GM12878 (cell line): ENCODE measurements at regions of chr2 and their contacts with region 1.

Region 1: DNA sequence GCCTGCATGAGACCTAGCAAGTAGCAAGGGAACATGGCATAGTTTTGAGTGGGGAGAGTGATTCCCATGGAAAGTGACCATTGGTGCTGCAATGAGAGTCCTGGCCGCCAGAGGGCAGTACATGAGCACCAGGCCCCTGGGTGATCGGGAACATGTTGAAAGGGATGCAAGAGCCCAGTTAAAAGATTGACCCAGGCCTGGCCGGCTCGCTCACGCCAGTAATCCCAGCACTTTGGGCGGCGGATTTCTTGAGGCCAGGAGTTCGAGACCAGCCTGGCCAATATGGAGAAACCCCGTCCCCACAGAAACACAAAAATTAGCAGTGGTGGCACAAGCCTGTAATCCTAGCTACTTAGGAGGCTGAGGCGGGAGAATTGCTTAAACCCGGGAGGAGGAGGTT is 22.2 kb downstream of the FAP start:
- DNase-seq: no peak
- ATAC-seq: peak; percentile 98
- H3K4me3 ChIP-seq: no peak overlapping the region
- H3K27ac ChIP-seq: no peak overlapping the region
- H3K4me1 ChIP-seq: no peaks in the 10 kb centered on the region
- H3K27me3 ChIP-seq: no peaks in the 10 kb centered on the region
- CTCF ChIP-seq: peak; percentile 92 to 97 (median 95)
- EP300 ChIP-seq: no peak
- POLR2A ChIP-seq: no peak
- RAD21 ChIP-seq: peak; percentile 78

Region 2: DNA sequence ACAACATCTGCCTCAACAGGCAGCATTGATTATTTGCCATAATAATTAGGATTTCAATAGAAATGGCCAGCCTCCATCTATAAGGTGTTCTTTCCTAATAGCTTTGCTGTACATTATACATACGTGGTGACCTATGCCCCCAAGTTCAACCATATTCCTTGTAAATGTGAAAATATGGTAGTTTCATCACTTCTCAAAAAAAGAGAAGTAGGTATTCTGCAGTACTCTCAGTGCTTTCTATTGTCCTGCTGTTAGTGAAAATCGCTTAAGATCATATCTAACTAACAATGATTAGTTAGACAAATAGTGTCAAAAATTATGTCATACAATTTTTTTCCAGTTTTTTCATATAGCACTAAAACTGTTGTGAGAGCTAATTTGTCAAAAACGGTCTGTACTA is 517.2 kb before region 1 on chr2:
- CTCF ChIA-PET with region 1: no interaction called
- POLR2A ChIA-PET with region 1: no interaction called
- RAD21 ChIA-PET with region 1: no interaction called
- SMC1A ChIA-PET with region 1: no interaction called
- in situ Hi-C with region 1: no loop called
- intact Hi-C with region 1: no loop called
- DNase-seq: no peak
- ATAC-seq: peak; percentile 63
- H3K4me3 ChIP-seq: no peak overlapping the region
- H3K27ac ChIP-seq: no peak overlapping the region
- H3K4me1 ChIP-seq: no peaks in the 10 kb centered on the region
- H3K27me3 ChIP-seq: no peaks in the 10 kb centered on the region
- CTCF ChIP-seq: no peak
- EP300 ChIP-seq: no peak
- POLR2A ChIP-seq: no peak
- RAD21 ChIP-seq: no peak

Region 3: GRCh38 chr2:161844834-161845233 is 376.2 kb before region 1 on chr2:
- CTCF ChIA-PET with region 1: no interaction called
- POLR2A ChIA-PET with region 1: no interaction called
- RAD21 ChIA-PET with region 1: no interaction called
- SMC1A ChIA-PET with region 1: no interaction called
- in situ Hi-C with region 1: no loop called
- intact Hi-C with region 1: no loop called
- DNase-seq: no peak
- ATAC-seq: no peak
- H3K4me3 ChIP-seq: no peak overlapping the region
- H3K27ac ChIP-seq: no peak overlapping the region
- H3K4me1 ChIP-seq: no peaks in the 10 kb centered on the region
- H3K27me3 ChIP-seq: no peaks in the 10 kb centered on the region
- CTCF ChIP-seq: no peak
- EP300 ChIP-seq: no peak
- POLR2A ChIP-seq: no peak
- RAD21 ChIP-seq: no peak

Region 4: GRCh38 chr2:162153608-162154224 is 67.3 kb before region 1 on chr2:
- CTCF ChIA-PET with region 1: interaction called, 12 read pairs
- POLR2A ChIA-PET with region 1: no interaction called
- RAD21 ChIA-PET with region 1: no interaction called
- SMC1A ChIA-PET with region 1: interaction called, 8 read pairs
- in situ Hi-C with region 1: no loop called
- intact Hi-C with region 1: no loop called
- DNase-seq: no peak
- ATAC-seq: peak; percentile 99
- H3K4me3 ChIP-seq: no peak overlapping the region
- H3K27ac ChIP-seq: no peak overlapping the region
- H3K4me1 ChIP-seq: no peaks in the 10 kb centered on the region
- H3K27me3 ChIP-seq: no peaks in the 10 kb centered on the region
- CTCF ChIP-seq: peak; percentile 80 to 90 (median 86)
- EP300 ChIP-seq: no peak
- POLR2A ChIP-seq: no peak
- RAD21 ChIP-seq: peak; percentile 70

Region 5: GRCh38 chr2:162196638-162197037 is 24.4 kb before region 1 on chr2:
- CTCF ChIA-PET with region 1: interaction called, 12 read pairs
- POLR2A ChIA-PET with region 1: no interaction called
- RAD21 ChIA-PET with region 1: no interaction called
- SMC1A ChIA-PET with region 1: interaction called, 3 read pairs
- in situ Hi-C with region 1: no loop called
- intact Hi-C with region 1: no loop called
- DNase-seq: no peak
- ATAC-seq: no peak
- H3K4me3 ChIP-seq: no peak overlapping the region
- H3K27ac ChIP-seq: no peak overlapping the region
- H3K4me1 ChIP-seq: no peaks in the 10 kb centered on the region
- H3K27me3 ChIP-seq: no peaks in the 10 kb centered on the region; a peak in 2 of 4 replicates
- CTCF ChIP-seq: no peak
- EP300 ChIP-seq: no peak
- POLR2A ChIP-seq: no peak
- RAD21 ChIP-seq: no peak

Region 6: GRCh38 chr2:162233197-162233596 is 12.1 kb after region 1 on chr2:
- CTCF ChIA-PET with region 1: interaction called, 34 read pairs
- POLR2A ChIA-PET with region 1: no interaction called
- RAD21 ChIA-PET with region 1: interaction called, 5 read pairs
- SMC1A ChIA-PET with region 1: interaction called, 8 read pairs
- in situ Hi-C with region 1: no loop called
- intact Hi-C with region 1: no loop called
- DNase-seq: no peak
- ATAC-seq: no peak
- H3K4me3 ChIP-seq: no peak overlapping the region
- H3K27ac ChIP-seq: no peak overlapping the region
- H3K4me1 ChIP-seq: no peaks in the 10 kb centered on the region
- H3K27me3 ChIP-seq: no peaks in the 10 kb centered on the region
- CTCF ChIP-seq: no peak
- EP300 ChIP-seq: no peak
- POLR2A ChIP-seq: no peak
- RAD21 ChIP-seq: no peak

Region 7: DNA sequence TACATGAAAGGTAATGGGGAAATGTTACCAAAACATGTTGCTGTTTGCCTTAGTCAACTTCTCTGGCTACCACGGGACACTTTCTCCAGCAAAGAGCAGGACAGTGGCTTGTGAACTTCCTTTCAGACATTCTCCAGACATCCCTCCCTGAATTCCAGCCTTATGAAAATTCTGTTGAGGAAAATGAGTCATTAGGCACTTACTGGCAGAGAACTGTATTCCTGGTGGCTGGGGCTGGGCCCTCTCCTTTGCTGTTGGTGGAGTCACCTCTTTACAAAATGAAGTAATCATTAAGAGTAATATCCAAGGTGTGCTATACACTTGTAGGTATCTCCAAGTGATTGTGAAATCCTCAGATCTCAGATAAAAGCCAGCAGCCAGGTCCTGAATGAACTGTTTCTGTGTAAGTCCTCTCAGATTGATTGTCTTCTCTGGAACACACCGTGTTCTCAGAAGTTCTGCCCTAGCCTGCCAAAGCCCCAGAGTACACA is 23.5 kb after region 1 on chr2:
- CTCF ChIA-PET with region 1: interaction called, 31 read pairs
- POLR2A ChIA-PET with region 1: no interaction called
- RAD21 ChIA-PET with region 1: no interaction called
- SMC1A ChIA-PET with region 1: interaction called, 11 read pairs
- in situ Hi-C with region 1: no loop called
- intact Hi-C with region 1: no loop called
- DNase-seq: no peak
- ATAC-seq: no peak
- H3K4me3 ChIP-seq: no peak overlapping the region
- H3K27ac ChIP-seq: no peak overlapping the region
- H3K4me1 ChIP-seq: no peaks in the 10 kb centered on the region
- H3K27me3 ChIP-seq: peaks cover 0 to 4% of the 10 kb centered on the region in 2 experiments; a peak in 2 of 4 replicates
- CTCF ChIP-seq: no peak
- EP300 ChIP-seq: no peak
- POLR2A ChIP-seq: no peak
- RAD21 ChIP-seq: no peak

Region 8: DNA sequence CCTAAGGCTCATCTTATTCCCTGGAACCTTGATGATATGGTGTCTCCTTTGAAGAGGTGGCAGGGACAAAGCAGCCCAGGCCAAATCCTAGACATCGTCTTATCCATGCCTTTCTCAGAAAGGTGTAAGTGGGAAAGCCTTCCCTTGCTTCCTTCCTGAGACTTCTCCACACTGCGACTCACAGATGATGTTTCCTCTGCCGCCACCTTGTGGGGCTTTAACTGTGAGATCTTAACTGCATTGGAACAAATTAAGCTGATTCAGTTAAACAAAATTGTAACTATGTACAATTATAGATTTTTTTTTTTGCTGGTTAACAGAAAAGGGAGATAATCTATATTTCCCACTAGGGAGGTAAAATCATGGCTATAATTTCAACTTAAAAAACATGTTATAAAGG is 112.9 kb after region 1 on chr2:
- CTCF ChIA-PET with region 1: interaction called, 161 read pairs
- POLR2A ChIA-PET with region 1: no interaction called
- RAD21 ChIA-PET with region 1: interaction called, 42 read pairs
- SMC1A ChIA-PET with region 1: interaction called, 40 read pairs
- in situ Hi-C with region 1: no loop called
- intact Hi-C with region 1: loop called (anchors 1 kb)
- DNase-seq: no peak
- ATAC-seq: peak; percentile 91
- H3K4me3 ChIP-seq: no peak overlapping the region
- H3K27ac ChIP-seq: no peak overlapping the region
- H3K4me1 ChIP-seq: no peaks in the 10 kb centered on the region
- H3K27me3 ChIP-seq: no peaks in the 10 kb centered on the region
- CTCF ChIP-seq: peak; percentile 55 to 81 (median 62)
- EP300 ChIP-seq: no peak
- POLR2A ChIP-seq: no peak
- RAD21 ChIP-seq: peak; percentile 71

Region 9: GRCh38 chr2:162795312-162795711 is 574.2 kb after region 1 on chr2:
- CTCF ChIA-PET with region 1: no interaction called
- POLR2A ChIA-PET with region 1: no interaction called
- RAD21 ChIA-PET with region 1: interaction called, 8 read pairs
- SMC1A ChIA-PET with region 1: interaction called, 3 read pairs
- in situ Hi-C with region 1: no loop called
- intact Hi-C with region 1: loop called (anchors 10 kb)
- DNase-seq: no peak
- ATAC-seq: peak; percentile 59; the same call in 2 of the 3 replicates
- H3K4me3 ChIP-seq: no peak overlapping the region
- H3K27ac ChIP-seq: no peak overlapping the region
- H3K4me1 ChIP-seq: no peaks in the 10 kb centered on the region
- H3K27me3 ChIP-seq: no peaks in the 10 kb centered on the region
- CTCF ChIP-seq: peak; percentile 17 to 42 (median 40); a peak in 4 of 6 replicates
- EP300 ChIP-seq: no peak
- POLR2A ChIP-seq: no peak
- RAD21 ChIP-seq: peak; percentile 72